ENCODE measurements at regions of chr3 and their contacts with region 1.

Region 1: GRCh38 chr3:46953234-46954010 is 23.1 kb downstream of the CCDC12 start:
- DNase-seq: peak; percentile 69
- ATAC-seq: peak; percentile 75
- H3K4me3 ChIP-seq: no peak overlapping the region
- H3K4me3 Mint-ChIP-seq: peak overlapping the region; percentile 64
- H3K27ac ChIP-seq: peak overlapping the region; percentile 66 to 83
- H3K27ac Mint-ChIP-seq: peak overlapping the region; percentile 80
- H3K4me1 ChIP-seq: peaks cover 75 to 89% of the 10 kb centered on the region in 2 donors
- H3K4me1 Mint-ChIP-seq: peaks cover 88% of the 10 kb centered on the region
- H3K27me3 ChIP-seq: no peaks in the 10 kb centered on the region
- H3K27me3 Mint-ChIP-seq: no peaks in the 10 kb centered on the region
- CTCF ChIP-seq: no peak

Region 2: DNA sequence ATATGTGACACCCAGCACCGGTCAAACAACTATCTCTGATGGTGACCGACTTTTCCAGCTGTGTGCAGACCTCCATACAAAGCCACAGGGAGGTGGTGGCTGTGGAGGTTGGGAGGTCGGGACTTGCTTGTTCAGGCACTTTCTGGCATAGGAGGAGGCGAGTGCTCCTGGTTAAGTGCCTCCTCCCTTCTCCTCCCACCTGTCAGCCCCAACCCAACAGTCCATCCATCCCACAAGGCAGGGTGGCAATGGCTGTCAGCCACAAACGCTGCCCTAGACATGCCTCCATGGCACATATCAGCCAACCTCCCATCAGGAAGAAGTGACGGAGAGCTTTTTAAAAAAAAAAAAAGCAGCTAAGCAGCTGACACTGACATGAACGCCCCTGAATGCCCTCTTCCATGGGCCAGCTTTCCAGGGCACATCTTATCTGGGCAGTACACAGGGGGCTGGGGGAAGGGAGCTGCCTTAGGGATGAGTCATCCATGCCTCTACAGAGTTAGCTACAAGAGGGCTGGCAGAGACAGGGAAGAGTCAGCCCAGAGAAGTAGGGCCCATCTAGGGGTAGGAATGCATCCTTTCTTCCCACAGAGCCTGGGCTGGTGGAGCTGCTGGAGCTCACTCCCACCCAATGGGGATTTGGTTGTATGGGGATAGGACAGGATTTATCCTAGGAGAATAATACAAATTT is 18.1 kb before region 1 on chr3:
- CTCF ChIA-PET with region 1: interaction called, 5 read pairs
- POLR2A ChIA-PET with region 1: interaction called, 4 read pairs
- intact Hi-C with region 1: loop called (anchors 2 kb)
- DNase-seq: no peak
- ATAC-seq: no peak
- H3K4me3 ChIP-seq: no peak overlapping the region
- H3K4me3 Mint-ChIP-seq: no peak overlapping the region
- H3K27ac ChIP-seq: peak overlapping the region in 1 of 2 donors; percentile 62
- H3K27ac Mint-ChIP-seq: peak overlapping the region; percentile 50
- H3K4me1 ChIP-seq: peaks cover 65 to 94% of the 10 kb centered on the region in 2 donors
- H3K4me1 Mint-ChIP-seq: peaks cover 82% of the 10 kb centered on the region
- H3K27me3 ChIP-seq: no peaks in the 10 kb centered on the region
- H3K27me3 Mint-ChIP-seq: no peaks in the 10 kb centered on the region
- CTCF ChIP-seq: no peak